Psoas muscle (tissue), 8 donors: ENCODE measurements at regions of chr17 and their contacts with region 1.

Region 1: DNA sequence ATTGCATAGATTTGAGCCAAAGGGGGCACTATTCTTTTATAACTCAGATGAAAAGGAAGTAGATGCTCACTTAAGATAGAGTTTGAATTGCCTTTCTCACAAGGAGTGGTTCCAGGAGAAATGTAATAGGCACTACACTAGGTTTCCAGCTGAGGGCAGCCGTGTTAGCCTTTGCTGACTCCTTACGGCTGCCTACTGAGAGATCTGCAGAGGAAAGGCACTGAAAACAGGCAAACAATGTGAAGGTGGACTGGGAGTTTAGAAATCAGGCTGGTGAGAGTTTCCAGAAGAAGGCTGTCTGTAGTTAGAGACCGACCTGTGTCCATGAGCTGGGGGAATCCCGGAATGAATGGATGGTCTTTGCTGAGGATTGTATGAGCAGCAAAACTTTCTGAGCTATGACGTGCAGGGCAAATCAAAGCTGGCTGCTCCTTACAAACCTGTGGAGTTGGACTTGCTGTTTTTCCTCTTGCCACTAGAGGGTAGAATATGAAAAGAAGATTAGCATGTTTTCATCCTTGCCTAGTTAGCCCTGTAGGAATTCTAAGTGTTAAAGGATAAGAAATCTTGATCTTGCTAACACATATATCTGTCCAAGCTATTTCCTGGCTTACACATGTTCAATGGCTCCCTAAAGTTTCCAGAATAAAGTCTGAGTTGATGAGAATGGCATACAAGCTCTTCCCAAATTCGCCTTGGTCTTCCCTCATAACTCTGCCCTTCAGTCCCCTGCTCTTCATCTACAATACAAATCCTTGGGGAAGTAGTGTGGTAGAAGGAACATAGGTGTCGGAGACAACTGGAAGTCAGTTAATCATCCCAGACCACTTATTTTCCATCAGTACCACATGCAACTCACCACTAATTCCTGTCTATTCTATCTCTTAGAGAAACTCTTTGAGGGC is 20.1 kb upstream of the TAOK1 start:
- DNase-seq: peak in 1 of 2 donors; percentile 31
- ATAC-seq: peak; percentile 91 to 96 (median 93)
- H3K4me3 ChIP-seq: peak overlapping the region; percentile 24
- H3K27ac ChIP-seq: no peak overlapping the region
- H3K4me1 ChIP-seq: no peaks in the 10 kb centered on the region
- H3K27me3 ChIP-seq: no peaks in the 10 kb centered on the region
- CTCF ChIP-seq: peak; percentile 84

Region 2: DNA sequence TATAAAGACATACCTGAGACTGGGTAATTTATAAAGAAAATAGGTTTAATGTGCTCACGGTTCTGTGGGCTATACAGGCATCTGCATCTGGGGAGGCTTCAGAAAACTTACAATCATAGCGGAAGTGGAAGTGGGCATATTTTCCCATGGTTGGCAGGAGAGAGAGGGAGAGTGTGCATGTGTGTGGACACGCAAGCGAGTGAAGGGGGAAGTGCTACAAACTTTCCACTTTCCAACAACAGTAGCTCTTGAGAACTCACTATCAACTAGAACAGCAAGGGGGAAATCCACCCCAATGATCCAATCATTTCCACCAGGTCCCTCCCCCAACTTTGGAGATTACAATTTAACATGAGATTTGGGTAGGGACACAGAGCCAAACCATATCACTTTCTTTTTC is 31.2 kb after region 1 on chr17:
- intact Hi-C with region 1: no loop called
- DNase-seq: no peak
- ATAC-seq: no peak
- H3K4me3 ChIP-seq: no peak overlapping the region
- H3K27ac ChIP-seq: no peak overlapping the region
- H3K4me1 ChIP-seq: peaks cover 8% of the 10 kb centered on the region
- H3K27me3 ChIP-seq: no peaks in the 10 kb centered on the region
- CTCF ChIP-seq: no peak

Region 3: DNA sequence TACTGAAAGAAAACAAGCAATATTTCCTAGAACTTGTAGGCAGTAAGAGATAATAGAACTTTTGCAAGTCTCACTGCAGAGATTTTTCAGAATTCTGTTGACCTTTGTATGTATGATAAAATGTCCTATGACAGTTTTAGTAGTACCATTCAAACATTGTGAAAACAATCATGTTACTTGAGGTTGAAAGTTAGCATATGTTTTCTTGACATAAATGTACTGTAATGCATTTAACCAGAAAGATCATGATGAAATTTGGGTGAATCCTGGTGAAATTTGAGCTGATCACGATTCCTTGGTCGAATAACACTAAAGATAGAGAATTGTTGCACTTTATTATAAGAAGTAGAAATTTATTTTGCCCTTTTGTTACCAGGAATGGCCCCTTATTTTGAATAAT is 105.8 kb after region 1 on chr17:
- intact Hi-C with region 1: no loop called
- DNase-seq: no peak
- ATAC-seq: no peak
- H3K4me3 ChIP-seq: no peak overlapping the region
- H3K27ac ChIP-seq: no peak overlapping the region
- H3K4me1 ChIP-seq: no peaks in the 10 kb centered on the region
- H3K27me3 ChIP-seq: no peaks in the 10 kb centered on the region
- CTCF ChIP-seq: no peak

Region 4: GRCh38 chr17:29533976-29534375 is 163.9 kb after region 1 on chr17:
- intact Hi-C with region 1: loop called (anchors 1 to 5 kb)
- DNase-seq: no peak
- ATAC-seq: no peak
- H3K4me3 ChIP-seq: no peak overlapping the region
- H3K27ac ChIP-seq: no peak overlapping the region
- H3K4me1 ChIP-seq: no peaks in the 10 kb centered on the region
- H3K27me3 ChIP-seq: no peaks in the 10 kb centered on the region
- CTCF ChIP-seq: no peak